ENCODE measurements at regions of chr13 and their contacts with region 1.

Region 1: DNA sequence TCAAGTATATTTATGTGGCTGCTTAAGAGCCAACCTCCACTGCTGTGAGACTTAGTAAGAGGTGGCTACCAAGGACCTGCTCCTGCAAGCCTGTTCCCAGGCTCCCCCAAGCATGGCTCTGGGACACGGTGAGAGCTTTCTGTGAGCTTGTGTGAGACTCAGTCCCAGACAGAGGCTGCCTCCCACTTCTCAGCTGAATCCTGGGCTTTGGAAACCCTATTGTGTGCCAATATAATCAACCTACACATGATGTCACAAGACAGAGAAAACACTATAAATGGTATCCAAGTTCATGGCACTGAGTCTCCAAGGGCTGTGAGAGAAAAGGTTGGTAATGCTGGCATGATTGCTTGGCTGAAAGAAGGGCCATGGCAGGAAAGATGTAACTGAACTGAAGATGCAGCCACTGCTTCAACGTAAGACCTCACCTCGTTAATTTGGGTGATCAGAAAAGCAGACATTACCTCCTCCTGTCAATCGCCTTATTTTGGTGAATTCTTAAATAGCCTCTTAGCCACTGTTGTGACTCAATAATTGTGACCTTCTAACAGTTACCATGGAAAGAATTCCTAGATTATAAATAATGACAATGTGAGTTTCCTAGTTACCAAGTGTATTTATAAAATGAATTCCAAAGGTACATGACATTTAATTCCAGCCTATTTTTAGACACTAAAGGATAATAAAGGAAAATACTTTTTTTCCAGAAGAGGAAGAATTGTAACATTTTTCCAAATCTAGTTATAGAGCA is 332.0 kb downstream of the IRS2 start:
- DNase-seq: peak in 1 of 2 donors; percentile 77
- H3K4me3 ChIP-seq: no peak overlapping the region
- H3K27ac ChIP-seq: peak overlapping the region; percentile 65 to 79
- H3K4me1 ChIP-seq: peaks cover 0 to 3% of the 10 kb centered on the region in 2 donors
- H3K27me3 ChIP-seq: no peaks in the 10 kb centered on the region
- CTCF ChIP-seq: no peak

Region 2: DNA sequence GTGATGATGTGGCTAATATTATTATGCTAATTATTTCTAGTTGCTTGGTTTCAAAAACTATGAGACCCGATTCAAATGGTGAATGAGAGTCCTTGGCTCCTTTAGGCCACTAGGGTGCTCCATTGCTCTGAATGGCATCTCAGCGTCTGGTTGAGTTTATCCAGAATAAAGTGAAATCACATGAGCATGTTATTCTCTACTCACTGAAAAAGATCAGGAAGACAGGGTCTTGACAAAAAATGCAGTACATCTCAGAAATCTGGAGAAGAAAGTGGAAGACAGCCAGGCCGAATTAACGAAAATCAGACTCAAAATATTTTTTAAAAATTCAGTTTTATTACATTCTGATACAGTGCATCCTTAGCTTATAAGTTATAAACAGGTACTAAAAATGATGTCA is 308.7 kb before region 1 on chr13:
- intact Hi-C with region 1: loop called (anchors 5 kb)
- DNase-seq: no peak
- H3K4me3 ChIP-seq: no peak overlapping the region
- H3K27ac ChIP-seq: no peak overlapping the region
- H3K4me1 ChIP-seq: peaks cover 0 to 2% of the 10 kb centered on the region in 2 donors
- H3K27me3 ChIP-seq: peaks cover 2% of the 10 kb centered on the region
- CTCF ChIP-seq: peak; percentile 69 to 86 (median 79)

Region 3: DNA sequence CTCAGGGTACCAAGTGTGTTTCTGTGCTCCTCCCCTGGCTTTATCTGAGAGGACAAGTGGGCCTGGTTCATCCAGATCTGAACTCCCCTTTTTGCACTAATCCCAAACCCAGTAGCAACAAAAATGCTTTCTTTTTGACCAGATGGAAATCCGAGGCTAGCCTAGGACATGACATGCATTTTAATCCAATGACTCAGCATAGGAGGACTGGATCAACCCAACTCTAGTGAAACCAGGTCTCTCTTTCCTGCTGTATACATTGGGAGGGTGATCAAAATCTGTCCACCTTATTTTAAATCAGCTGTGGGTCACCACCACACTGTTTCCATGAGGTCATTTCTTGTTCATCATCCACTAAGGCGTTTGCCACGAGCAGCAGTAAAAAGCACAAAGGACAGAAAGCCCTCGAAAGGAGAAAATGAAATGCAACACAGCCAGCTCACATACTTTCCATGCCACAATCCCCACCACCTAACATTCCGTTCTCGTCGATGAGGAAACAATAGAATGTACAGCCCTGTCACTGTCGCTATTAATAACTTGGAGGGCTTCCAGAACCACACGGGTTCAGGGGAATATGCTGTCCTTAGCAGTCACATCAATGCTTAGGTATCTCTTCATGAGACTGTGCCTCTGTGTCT is 210.9 kb before region 1 on chr13:
- intact Hi-C with region 1: loop called (anchors 10 kb)
- DNase-seq: peak in 1 of 2 donors; percentile 79
- H3K4me3 ChIP-seq: peak overlapping the region; percentile 37
- H3K27ac ChIP-seq: peak overlapping the region; percentile 59 to 77
- H3K4me1 ChIP-seq: peaks cover 0 to 19% of the 10 kb centered on the region in 2 donors
- H3K27me3 ChIP-seq: no peaks in the 10 kb centered on the region
- CTCF ChIP-seq: no peak

Region 4: DNA sequence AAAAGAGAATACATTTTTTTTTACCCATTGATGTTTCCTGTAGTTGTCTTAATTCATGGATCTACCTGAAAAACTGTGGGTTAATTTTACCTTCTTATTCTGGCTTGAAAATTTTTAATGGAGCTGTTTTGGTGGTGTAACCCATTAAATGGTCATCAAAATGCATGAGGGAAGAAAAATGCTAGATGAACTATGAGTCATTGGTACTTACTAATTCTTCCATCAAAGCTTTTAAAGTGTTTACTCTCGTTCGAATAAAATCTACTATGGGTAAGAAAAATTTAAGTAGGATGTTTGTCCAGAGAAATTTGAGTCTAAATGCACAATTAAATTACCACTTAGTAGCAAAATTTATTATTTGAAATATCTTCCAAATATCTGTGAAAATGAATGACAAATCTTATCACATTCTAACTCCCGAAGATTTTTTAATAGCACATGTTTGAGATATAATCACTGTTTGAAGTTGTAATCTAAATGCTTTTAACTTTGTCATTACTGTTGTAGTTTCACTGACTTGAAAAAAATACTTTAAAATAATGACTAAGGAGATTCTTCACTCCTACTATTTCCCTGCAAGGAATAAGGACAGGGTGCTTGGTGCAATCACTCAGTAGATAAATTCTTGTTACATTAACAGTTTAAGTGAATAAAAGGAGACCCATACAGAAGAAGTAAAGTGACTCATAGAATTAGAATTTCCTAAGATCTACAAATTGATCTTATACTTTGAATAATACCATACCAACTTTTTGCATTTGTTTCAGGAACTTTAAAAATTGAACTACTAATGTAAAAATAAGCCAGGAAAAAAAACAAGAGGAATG is 105.6 kb before region 1 on chr13:
- intact Hi-C with region 1: no loop called
- DNase-seq: no peak
- H3K4me3 ChIP-seq: no peak overlapping the region
- H3K27ac ChIP-seq: no peak overlapping the region
- H3K4me1 ChIP-seq: no peaks in the 10 kb centered on the region
- H3K27me3 ChIP-seq: no peaks in the 10 kb centered on the region
- CTCF ChIP-seq: no peak

Region 5: GRCh38 chr13:109389892-109390345 is 64.4 kb before region 1 on chr13:
- intact Hi-C with region 1: loop called (anchors 5 kb)
- DNase-seq: no peak
- H3K4me3 ChIP-seq: no peak overlapping the region
- H3K27ac ChIP-seq: no peak overlapping the region
- H3K4me1 ChIP-seq: peaks cover 0 to under 1% of the 10 kb centered on the region in 2 donors
- H3K27me3 ChIP-seq: no peaks in the 10 kb centered on the region
- CTCF ChIP-seq: no peak

Region 6: GRCh38 chr13:110126391-110126961 is 672.1 kb after region 1 on chr13:
- intact Hi-C with region 1: loop called (anchors 10 kb)
- DNase-seq: peak in 1 of 2 donors; percentile 84
- H3K4me3 ChIP-seq: peak overlapping the region in 1 of 2 donors; percentile 47
- H3K27ac ChIP-seq: peak overlapping the region; percentile 83 to 85
- H3K4me1 ChIP-seq: peaks cover 0 to 27% of the 10 kb centered on the region in 2 donors
- H3K27me3 ChIP-seq: no peaks in the 10 kb centered on the region
- CTCF ChIP-seq: no peak